HCT116 (cell line): ENCODE measurements at regions of chr5 and their contacts with region 1.

Region 1: DNA sequence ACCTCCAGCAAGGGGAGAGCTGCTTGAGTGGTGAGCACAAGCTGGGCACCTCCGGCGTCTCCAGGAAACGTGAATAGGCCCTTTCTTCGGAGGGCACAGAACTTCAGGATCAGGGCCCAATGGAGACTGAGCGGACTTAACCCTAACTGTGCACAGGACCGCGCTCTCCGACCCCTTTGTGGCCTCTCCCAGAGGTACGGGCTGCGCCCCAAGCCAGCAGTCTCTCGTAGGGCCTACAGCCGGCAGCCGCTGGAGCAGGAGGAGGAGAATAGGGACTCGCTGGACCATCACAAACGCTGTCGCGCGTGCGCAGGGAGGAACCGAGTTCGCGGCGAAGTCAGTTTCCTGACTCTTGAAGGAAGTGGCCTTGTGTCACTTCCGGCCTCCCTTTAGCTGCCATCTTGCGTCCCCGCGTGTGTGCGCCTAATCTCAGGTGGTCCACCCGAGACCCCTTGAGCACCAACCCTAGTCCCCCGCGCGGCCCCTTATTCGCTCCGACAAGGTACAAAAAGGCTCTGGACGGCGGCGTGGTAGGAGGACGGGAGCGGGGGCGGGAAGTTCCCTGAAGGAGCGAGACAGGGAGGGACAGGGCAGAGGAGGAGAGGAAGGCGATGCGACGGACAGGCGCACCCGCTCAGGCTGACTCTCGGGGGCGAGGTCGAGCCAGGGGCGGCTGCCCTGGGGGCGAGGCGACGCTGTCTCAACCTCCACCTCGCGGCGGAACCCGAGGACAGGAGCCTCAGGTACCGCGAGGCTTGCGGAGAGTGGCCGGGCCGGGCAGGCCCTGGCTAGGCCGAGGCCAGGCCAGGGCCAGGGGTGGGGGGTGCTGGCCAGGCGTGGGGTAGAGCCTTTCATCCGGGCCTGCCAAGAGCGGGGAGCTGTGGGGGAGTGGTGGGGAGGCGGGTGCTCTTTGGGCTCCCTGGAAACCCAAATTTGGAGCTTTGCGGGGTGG is at the start of gene BTF3:
- DNase-seq: peak; percentile 92
- ATAC-seq: peak; percentile 93
- H3K4me3 ChIP-seq: peak within 1 kb of the TSS; percentile 90 to 95
- H3K27ac ChIP-seq: peak within 1 kb of the TSS; percentile 91
- H3K4me1 ChIP-seq: peaks cover 10 to 26% of the 10 kb centered on the region in 2 experiments
- H3K27me3 ChIP-seq: no peaks in the 10 kb centered on the region
- CTCF ChIP-seq: no peak
- POLR2A ChIP-seq: peak; percentile 80
- RAD21 ChIP-seq: no peak
- total RNA-seq, gene BTF3: 868 TPM

Region 2: GRCh38 chr5:73486119-73486899 is 12.0 kb before region 1 on chr5:
- CTCF ChIA-PET with region 1: interaction called, 14 read pairs
- POLR2A ChIA-PET with region 1: interaction called, 6 read pairs
- RAD21 ChIA-PET with region 1: no interaction called
- intact Hi-C with region 1: no loop called
- DNase-seq: no peak
- ATAC-seq: no peak
- H3K4me3 ChIP-seq: no peak overlapping the region
- H3K27ac ChIP-seq: no peak overlapping the region
- H3K4me1 ChIP-seq: no peaks in the 10 kb centered on the region
- H3K27me3 ChIP-seq: no peaks in the 10 kb centered on the region
- CTCF ChIP-seq: no peak
- POLR2A ChIP-seq: no peak
- RAD21 ChIP-seq: no peak